Heart left ventricle (tissue), 16 donors: ENCODE measurements at regions of chr21 and their contacts with region 1.

Region 1: GRCh38 chr21:45554477-45555175 is 12.4 kb upstream of the SLC19A1 start:
- DNase-seq: peak; percentile 76 to 93 (median 84)
- ATAC-seq: peak; percentile 70 to 84 (median 76)
- H3K4me3 ChIP-seq: peak overlapping the region; percentile 17 to 72 (median 58)
- H3K27ac ChIP-seq: peak overlapping the region in 6 of 12 donors; percentile 12 to 88 (median 68)
- H3K4me1 ChIP-seq: peaks cover 0 to 45% (median 4%) of the 10 kb centered on the region in 12 donors
- H3K27me3 ChIP-seq: peaks cover 0 to 10% (median 0%) of the 10 kb centered on the region in 9 donors
- CTCF ChIP-seq: peak; percentile 65 to 88 (median 78)
- POLR2A ChIP-seq: no peak

Region 2: DNA sequence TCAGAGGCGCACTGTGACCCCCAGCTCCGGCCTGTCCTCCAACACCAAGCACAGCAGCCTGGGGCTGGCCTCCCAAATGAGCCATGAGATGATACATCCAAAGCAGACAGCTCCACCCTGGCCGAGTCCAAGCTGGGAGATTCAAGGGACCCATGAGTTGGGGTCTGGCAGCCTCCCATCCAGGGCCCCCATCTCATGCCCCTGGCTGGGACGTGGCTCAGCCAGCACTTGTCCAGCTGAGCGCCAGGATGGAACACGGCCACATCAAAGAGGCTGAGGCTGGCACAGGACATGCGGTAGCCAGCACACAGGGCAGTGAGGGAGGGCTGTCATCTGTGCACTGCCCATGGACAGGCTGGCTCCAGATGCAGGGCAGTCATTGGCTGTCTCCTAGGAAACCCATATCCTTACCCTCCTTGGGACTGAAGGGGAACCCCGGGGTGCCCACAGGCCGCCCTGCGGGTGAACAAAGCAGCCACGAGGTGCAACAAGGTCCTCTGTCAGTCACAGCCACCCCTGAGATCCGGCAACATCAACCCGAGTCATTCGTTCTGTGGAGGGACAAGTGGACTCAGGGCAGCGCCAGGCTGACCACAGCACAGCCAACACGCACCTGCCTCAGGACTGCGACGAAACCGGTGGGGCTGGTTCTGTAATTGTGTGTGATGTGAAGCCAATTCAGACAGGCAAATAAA is 41.5 kb before region 1 on chr21:
- intact Hi-C with region 1: no loop called
- DNase-seq: peak in 3 of 5 donors; percentile 15 to 57 (median 24)
- ATAC-seq: peak in 2 of 4 donors; percentile 2 to 16
- H3K4me3 ChIP-seq: no peak overlapping the region
- H3K27ac ChIP-seq: no peak overlapping the region
- H3K4me1 ChIP-seq: peaks cover 0 to 4% (median 0%) of the 10 kb centered on the region in 12 donors
- H3K27me3 ChIP-seq: no peaks in the 10 kb centered on the region
- CTCF ChIP-seq: no peak
- POLR2A ChIP-seq: no peak

Region 3: GRCh38 chr21:45590246-45590725 is 35.7 kb after region 1 on chr21:
- intact Hi-C with region 1: loop called in 3 of 10 experiments (anchors 5 kb)
- DNase-seq: peak; percentile 56 to 88 (median 65)
- ATAC-seq: peak in 3 of 4 donors; percentile 88 to 95 (median 93)
- H3K4me3 ChIP-seq: peak overlapping the region; percentile 26 to 64 (median 50)
- H3K27ac ChIP-seq: peak overlapping the region in 1 of 12 donors; percentile 9
- H3K4me1 ChIP-seq: peaks cover 0 to 19% (median 6%) of the 10 kb centered on the region in 12 donors
- H3K27me3 ChIP-seq: peaks cover 0 to 47% (median 23%) of the 10 kb centered on the region in 9 donors
- CTCF ChIP-seq: no peak
- POLR2A ChIP-seq: no peak

Region 4: GRCh38 chr21:45596704-45597318 is 42.2 kb after region 1 on chr21:
- intact Hi-C with region 1: loop called in 6 of 10 experiments (anchors 1 to 5 kb)
- DNase-seq: peak; percentile 58 to 86 (median 66)
- ATAC-seq: peak in 3 of 4 donors; percentile 82 to 85 (median 85)
- H3K4me3 ChIP-seq: no peak overlapping the region
- H3K27ac ChIP-seq: no peak overlapping the region
- H3K4me1 ChIP-seq: peaks cover 0 to 3% (median 0%) of the 10 kb centered on the region in 12 donors
- H3K27me3 ChIP-seq: peaks cover 0 to 46% (median 5%) of the 10 kb centered on the region in 9 donors
- CTCF ChIP-seq: peak; percentile 63 to 88 (median 74)
- POLR2A ChIP-seq: no peak

Region 5: GRCh38 chr21:45820171-45821091 is 265.8 kb after region 1 on chr21:
- intact Hi-C with region 1: loop called (anchors 1 to 5 kb)
- DNase-seq: peak; percentile 67 to 85 (median 69)
- ATAC-seq: peak; percentile 77 to 90 (median 86)
- H3K4me3 ChIP-seq: no peak overlapping the region
- H3K27ac ChIP-seq: no peak overlapping the region
- H3K4me1 ChIP-seq: peaks cover 0 to 5% (median 0%) of the 10 kb centered on the region in 12 donors
- H3K27me3 ChIP-seq: no peaks in the 10 kb centered on the region
- CTCF ChIP-seq: peak; percentile 69 to 84 (median 78)
- POLR2A ChIP-seq: no peak

Region 6: GRCh38 chr21:45923146-45923545 is 368.5 kb after region 1 on chr21:
- intact Hi-C with region 1: loop called in 6 of 10 experiments (anchors 1 to 10 kb)
- DNase-seq: peak; percentile 66 to 83 (median 78)
- ATAC-seq: peak; percentile 87 to 94 (median 92)
- H3K4me3 ChIP-seq: no peak overlapping the region
- H3K27ac ChIP-seq: no peak overlapping the region
- H3K4me1 ChIP-seq: peaks cover 0 to 7% (median 0%) of the 10 kb centered on the region in 12 donors
- H3K27me3 ChIP-seq: no peaks in the 10 kb centered on the region
- CTCF ChIP-seq: peak; percentile 74 to 93 (median 88)
- POLR2A ChIP-seq: no peak